ENCODE measurements at regions of chr3 and their contacts with region 1.

Region 1: DNA sequence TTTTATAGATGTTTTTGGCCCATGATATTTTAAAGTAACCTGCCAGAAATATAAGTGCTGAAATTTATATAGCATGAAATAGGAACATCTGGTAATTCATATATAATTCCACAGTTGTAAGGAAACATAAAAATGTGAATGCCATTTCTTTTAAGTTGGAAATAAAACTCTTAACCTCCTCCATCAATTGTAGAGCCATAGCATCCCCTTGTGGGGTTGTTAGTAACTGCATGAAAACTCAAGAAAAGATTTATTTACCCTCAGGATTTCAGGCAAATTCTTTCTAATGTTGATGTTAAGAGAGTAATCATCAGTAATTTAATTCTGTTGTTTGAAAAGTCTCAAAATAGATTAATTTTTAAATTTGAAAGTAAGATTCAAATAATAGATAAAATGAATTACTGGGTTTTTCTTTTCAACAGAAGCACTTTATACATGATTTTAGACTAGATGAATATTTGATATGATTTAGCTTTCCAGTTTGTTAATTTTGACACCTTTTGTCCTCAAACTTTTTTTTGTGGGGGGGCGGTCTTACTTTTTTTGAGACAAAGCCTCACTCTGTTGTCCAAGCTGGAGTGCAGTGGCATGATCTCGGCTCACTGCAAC is 74.7 kb downstream of the RASA2 start:
- DNase-seq: peak; percentile 34 to 73 (median 41)
- ATAC-seq: peak; percentile 40; the same call in 2 of the 3 replicates
- H3K4me3 ChIP-seq: no peak overlapping the region
- H3K27ac ChIP-seq: no peak overlapping the region
- H3K4me1 ChIP-seq: peaks cover 10 to 19% of the 10 kb centered on the region in 2 experiments; a peak in 4 of 5 replicates
- H3K27me3 ChIP-seq: no peaks in the 10 kb centered on the region
- CTCF ChIP-seq: peak; percentile 71 to 99 (median 85)
- EP300 ChIP-seq: no peak
- POLR2A ChIP-seq: no peak
- RAD21 ChIP-seq: peak; percentile 98 to 99

Region 2: GRCh38 chr3:141303481-141304223 is 257.9 kb before region 1 on chr3:
- CTCF ChIA-PET with region 1: interaction called, 10 read pairs
- POLR2A ChIA-PET with region 1: no interaction called
- in situ Hi-C with region 1: no loop called
- intact Hi-C with region 1: no loop called
- DNase-seq: peak; percentile 68 to 85 (median 70)
- ATAC-seq: peak; percentile 92
- H3K4me3 ChIP-seq: no peak overlapping the region
- H3K27ac ChIP-seq: no peak overlapping the region
- H3K4me1 ChIP-seq: peaks cover 0 to 6% of the 10 kb centered on the region in 2 experiments; a peak in 3 of 5 replicates
- H3K27me3 ChIP-seq: peaks cover 0 to 18% of the 10 kb centered on the region in 2 experiments; a peak in 3 of 5 replicates
- CTCF ChIP-seq: peak; percentile 67 to 90 (median 69)
- EP300 ChIP-seq: no peak
- POLR2A ChIP-seq: no peak
- RAD21 ChIP-seq: peak; percentile 70 to 87

Region 3: GRCh38 chr3:141360888-141361598 is 200.5 kb before region 1 on chr3:
- CTCF ChIA-PET with region 1: no interaction called
- POLR2A ChIA-PET with region 1: no interaction called
- in situ Hi-C with region 1: no loop called
- intact Hi-C with region 1: loop called (anchors 5 kb)
- DNase-seq: peak; percentile 45 to 78 (median 60)
- ATAC-seq: peak; percentile 86
- H3K4me3 ChIP-seq: no peak overlapping the region
- H3K27ac ChIP-seq: peak overlapping the region; percentile 37; the same call in 1 of the 3 replicates
- H3K4me1 ChIP-seq: peaks cover 0 to 30% of the 10 kb centered on the region in 2 experiments; a peak in 3 of 5 replicates
- H3K27me3 ChIP-seq: no peaks in the 10 kb centered on the region
- CTCF ChIP-seq: peak; percentile 77 to 90 (median 81)
- EP300 ChIP-seq: no peak
- POLR2A ChIP-seq: no peak
- RAD21 ChIP-seq: peak; percentile 90 to 93

Region 4: GRCh38 chr3:141460097-141460704 is 101.3 kb before region 1 on chr3:
- CTCF ChIA-PET with region 1: interaction called, 76 read pairs
- POLR2A ChIA-PET with region 1: interaction called, 11 read pairs
- in situ Hi-C with region 1: loop called (anchors 5 kb)
- intact Hi-C with region 1: loop called (anchors 1 kb)
- DNase-seq: peak; percentile 70 to 91 (median 77)
- ATAC-seq: peak; percentile 97
- H3K4me3 ChIP-seq: no peak overlapping the region
- H3K27ac ChIP-seq: no peak overlapping the region
- H3K4me1 ChIP-seq: peaks cover 12 to 30% of the 10 kb centered on the region in 2 experiments; a peak in 4 of 5 replicates
- H3K27me3 ChIP-seq: no peaks in the 10 kb centered on the region
- CTCF ChIP-seq: peak; percentile 91 to 96 (median 93)
- EP300 ChIP-seq: no peak
- POLR2A ChIP-seq: no peak
- RAD21 ChIP-seq: peak; percentile 96 to 97

Region 5: GRCh38 chr3:141477224-141477623 is 84.3 kb before region 1 on chr3:
- CTCF ChIA-PET with region 1: interaction called, 3 read pairs
- POLR2A ChIA-PET with region 1: interaction called, 3 read pairs
- in situ Hi-C with region 1: no loop called
- intact Hi-C with region 1: loop called (anchors 1 kb)
- DNase-seq: peak in 2 of 4 experiments; percentile 56 to 66
- ATAC-seq: peak; percentile 80
- H3K4me3 ChIP-seq: no peak overlapping the region
- H3K27ac ChIP-seq: no peak overlapping the region
- H3K4me1 ChIP-seq: peaks cover 3 to 9% of the 10 kb centered on the region in 2 experiments; a peak in 2 of 5 replicates
- H3K27me3 ChIP-seq: no peaks in the 10 kb centered on the region
- CTCF ChIP-seq: no peak
- EP300 ChIP-seq: no peak
- POLR2A ChIP-seq: no peak
- RAD21 ChIP-seq: 0 out of 4 replicates have a peak, but pooled peaks of 1 of the 2 experiments have one; percentile 4

Region 6: GRCh38 chr3:141669434-141669833 is 107.9 kb after region 1 on chr3:
- CTCF ChIA-PET with region 1: no interaction called
- POLR2A ChIA-PET with region 1: no interaction called
- in situ Hi-C with region 1: no loop called
- intact Hi-C with region 1: no loop called
- DNase-seq: no peak
- ATAC-seq: no peak
- H3K4me3 ChIP-seq: no peak overlapping the region
- H3K27ac ChIP-seq: no peak overlapping the region
- H3K4me1 ChIP-seq: no peaks in the 10 kb centered on the region
- H3K27me3 ChIP-seq: 0 out of 5 replicates have a peak, but pooled peaks cover 0 to 1% of the 10 kb centered on the region in 2 experiments
- CTCF ChIP-seq: no peak
- EP300 ChIP-seq: no peak
- POLR2A ChIP-seq: no peak
- RAD21 ChIP-seq: no peak

Measured in K562 (cell line).